ENCODE measurements at regions of chr15 and their contacts with region 1.

Region 1: DNA sequence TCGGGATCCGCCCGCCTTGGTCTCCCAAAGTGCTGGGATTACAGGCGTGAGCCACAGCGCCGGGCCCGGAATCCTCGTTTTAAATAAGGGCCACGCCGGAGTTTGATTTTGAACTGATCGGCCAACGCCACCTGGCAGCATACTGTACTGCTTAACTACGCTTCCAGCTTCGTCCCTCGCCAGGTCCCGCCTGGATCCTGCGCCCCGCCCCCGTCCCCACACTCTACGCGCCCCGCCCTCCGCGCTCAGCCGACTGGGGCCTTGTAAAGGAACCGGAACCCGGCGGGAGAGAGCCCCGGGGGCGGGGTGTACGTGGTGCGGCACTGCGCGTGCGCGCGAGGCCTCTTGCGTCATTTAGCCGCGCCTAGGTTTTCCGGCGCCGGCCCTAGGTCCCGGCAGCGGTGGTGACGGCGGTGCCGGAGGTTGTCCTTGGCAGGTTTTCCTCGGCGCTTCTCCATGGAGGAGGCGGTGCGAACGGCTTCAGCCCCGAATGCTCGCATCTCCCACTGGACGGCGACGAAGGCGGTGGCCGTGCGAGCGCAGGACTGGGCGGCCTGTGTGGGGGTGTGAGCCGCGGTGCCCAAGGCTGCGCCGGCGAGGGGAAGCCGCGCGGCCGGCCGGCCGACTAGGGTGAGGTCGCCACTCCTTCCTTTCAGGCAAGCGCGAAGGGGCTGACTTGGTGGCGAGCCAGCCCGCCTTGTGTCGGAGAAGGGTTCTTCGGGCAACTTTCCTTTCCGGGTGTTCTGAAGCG is at the start of gene NIPA2:
- DNase-seq: peak; percentile 99
- H3K4me3 ChIP-seq: peak within 1 kb of the TSS; percentile 66 to 96 (median 84)
- H3K27ac ChIP-seq: peak within 1 kb of the TSS; percentile 89 to 98 (median 97)
- H3K4me1 ChIP-seq: peaks cover 22 to 52% (median 41%) of the 10 kb centered on the region in 6 donors
- H3K27me3 ChIP-seq: no peaks in the 10 kb centered on the region
- CTCF ChIP-seq: peak in 5 of 11 experiments; percentile 6 to 40 (median 16)
- POLR2A ChIP-seq: peak; percentile 47 to 88 (median 58)
- total RNA-seq, gene NIPA2: 46.1 to 91.4 (median 61.0) TPM

Region 2: DNA sequence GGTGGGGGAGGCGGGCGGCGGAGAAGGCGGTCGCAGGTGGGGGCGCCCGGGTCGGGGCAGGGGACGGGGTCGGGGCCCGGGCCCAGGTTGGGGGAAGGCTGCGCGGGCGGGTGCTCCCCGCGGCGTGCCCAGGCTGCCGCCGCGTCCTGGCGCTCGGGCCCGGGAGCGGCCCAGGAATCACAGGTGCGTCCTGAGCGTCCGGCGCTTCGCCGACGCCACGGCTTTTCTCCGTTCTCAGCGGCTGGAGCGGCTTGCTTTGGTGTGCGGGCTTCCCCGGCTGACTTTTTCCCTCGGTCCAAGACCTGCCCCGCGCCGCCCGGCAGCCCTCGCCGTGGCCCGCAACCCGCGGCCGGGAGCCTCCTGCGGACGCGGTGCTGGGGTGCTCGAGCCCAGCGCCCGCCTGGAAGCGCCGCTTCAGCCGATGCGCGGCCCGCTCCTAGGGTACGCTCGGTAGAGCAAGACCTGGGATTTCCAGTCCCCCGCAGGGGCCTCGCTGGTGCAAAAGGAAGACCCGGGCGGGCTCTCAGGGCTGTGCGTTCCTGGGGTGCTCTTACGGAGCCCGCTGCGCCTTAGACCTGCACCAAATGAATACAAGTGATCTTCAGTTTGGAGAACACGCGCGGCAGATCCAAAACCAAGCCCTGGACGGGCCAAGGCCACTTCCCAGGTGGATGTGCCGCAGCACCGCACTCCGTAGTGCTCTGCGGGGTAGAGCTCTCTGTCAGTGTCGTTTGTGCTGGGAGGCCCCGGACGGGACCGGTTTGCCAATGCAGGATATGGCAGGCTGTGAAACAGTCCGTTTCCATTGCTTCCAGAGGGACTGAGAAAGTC is 51.4 kb before region 1 on chr15:
- intact Hi-C with region 1: loop called (anchors 5 kb)
- DNase-seq: peak; percentile 80
- H3K4me3 ChIP-seq: peak overlapping the region; percentile 60 to 93 (median 78)
- H3K27ac ChIP-seq: peak overlapping the region; percentile 41 to 93 (median 84)
- H3K4me1 ChIP-seq: peaks cover 0 to 43% (median 21%) of the 10 kb centered on the region in 6 donors
- H3K27me3 ChIP-seq: peaks cover 0 to 7% (median 0%) of the 10 kb centered on the region in 7 donors
- CTCF ChIP-seq: no peak
- POLR2A ChIP-seq: no peak

Region 3: GRCh38 chr15:22980189-22981050 is 142.0 kb after region 1 on chr15 and contains the start of gene CYFIP1:
- intact Hi-C with region 1: no loop called
- DNase-seq: peak; percentile 88
- H3K4me3 ChIP-seq: peak within 1 kb of the TSS; percentile 58 to 96 (median 80)
- H3K27ac ChIP-seq: peak within 1 kb of the TSS; percentile 17 to 87 (median 82)
- H3K4me1 ChIP-seq: peaks cover 5 to 37% (median 21%) of the 10 kb centered on the region in 6 donors
- H3K27me3 ChIP-seq: peaks cover 0 to 31% (median 20%) of the 10 kb centered on the region in 7 donors
- CTCF ChIP-seq: no peak
- POLR2A ChIP-seq: no peak
- total RNA-seq, gene CYFIP1: 75.2 to 139 (median 90.6) TPM

Region 4: DNA sequence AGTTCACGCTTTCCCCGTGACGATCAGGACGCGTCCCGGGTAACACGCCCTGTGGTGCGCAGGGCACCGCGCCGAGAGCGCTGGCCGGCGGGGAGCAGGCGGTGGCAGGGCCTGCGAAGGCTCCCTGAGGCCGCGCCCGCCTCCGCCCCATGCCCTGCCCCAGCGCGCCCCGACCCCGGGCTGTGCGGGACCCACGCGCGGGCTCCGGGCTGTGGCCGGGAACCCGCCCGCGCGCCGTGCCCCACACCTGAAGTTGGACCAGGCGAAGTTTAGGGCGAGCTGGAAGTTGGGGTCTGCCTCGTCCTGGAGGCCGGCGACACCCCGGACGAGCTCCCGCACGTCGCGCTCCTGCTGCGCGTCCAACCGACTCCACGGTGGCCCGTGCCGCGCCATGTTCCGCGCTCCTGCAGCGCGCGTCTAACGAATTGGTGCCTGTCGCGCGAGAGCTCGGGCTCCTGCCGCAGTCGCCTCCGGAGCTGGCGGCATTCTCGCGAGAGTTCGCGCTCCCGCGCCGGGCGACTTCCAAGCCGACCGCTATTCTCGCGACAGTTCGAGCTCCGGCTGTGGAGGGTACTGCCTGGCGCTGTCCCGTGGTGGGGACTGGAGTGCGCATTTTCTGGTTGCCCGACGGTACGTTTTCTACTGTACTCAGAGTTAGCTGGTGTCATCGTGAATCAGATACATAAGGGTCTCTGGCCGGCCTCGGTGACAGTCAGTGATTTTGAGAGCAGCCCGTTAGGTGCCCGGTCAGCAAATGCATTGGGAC is 200.9 kb after region 1 on chr15 and contains the start of gene TUBGCP5:
- intact Hi-C with region 1: loop called (anchors 5 kb)
- DNase-seq: peak; percentile 98
- H3K4me3 ChIP-seq: peak within 1 kb of the TSS; percentile 85 to 99 (median 96)
- H3K27ac ChIP-seq: peak within 1 kb of the TSS in 7 of 8 donors; percentile 45 to 87 (median 85)
- H3K4me1 ChIP-seq: peaks cover 0 to 38% (median 21%) of the 10 kb centered on the region in 6 donors
- H3K27me3 ChIP-seq: no peaks in the 10 kb centered on the region
- CTCF ChIP-seq: peak; percentile 51 to 88 (median 75)
- POLR2A ChIP-seq: peak in 1 of 3 donors; percentile 73
- total RNA-seq, gene TUBGCP5: 15.5 to 27.5 (median 19.5) TPM